Lower leg skin (tissue), 4 donors: ENCODE measurements at regions of chr4 and their contacts with region 1.

Region 1: DNA sequence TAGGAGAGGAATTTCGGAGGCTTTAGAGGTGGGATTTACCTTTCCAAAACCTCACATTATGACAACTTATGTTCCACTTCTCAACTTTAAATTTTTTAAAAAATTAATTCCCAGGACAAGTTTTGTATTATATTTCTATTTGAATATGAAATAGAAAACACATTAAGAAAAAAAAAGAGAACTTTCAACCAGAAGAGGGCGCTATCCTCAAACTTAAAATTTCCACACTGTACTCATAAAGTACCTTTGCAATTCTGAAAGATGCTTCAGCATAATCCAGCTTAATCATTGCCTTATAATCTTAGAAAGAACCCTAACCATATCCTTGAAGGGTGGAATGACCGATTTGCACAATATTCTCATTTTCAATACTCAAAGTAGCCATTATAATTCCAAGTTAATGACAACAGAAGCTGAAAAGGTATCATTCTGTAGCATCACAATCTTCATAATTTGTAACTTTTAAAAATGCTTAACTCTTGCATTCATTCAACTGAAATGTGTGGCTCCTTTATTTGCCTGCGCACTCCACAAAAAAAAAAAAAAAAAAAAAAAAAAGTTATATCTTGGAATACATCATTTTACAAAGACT is 158.0 kb downstream of the KCNIP4 start:
- DNase-seq: no peak
- H3K4me3 ChIP-seq: no peak overlapping the region
- CTCF ChIP-seq: no peak
- POLR2A ChIP-seq: no peak

Region 2: GRCh38 chr4:20075248-20075871 is 1715.2 kb before region 1 on chr4:
- intact Hi-C with region 1: no loop called
- DNase-seq: no peak
- H3K4me3 ChIP-seq: no peak overlapping the region
- CTCF ChIP-seq: no peak
- POLR2A ChIP-seq: no peak

Region 3: DNA sequence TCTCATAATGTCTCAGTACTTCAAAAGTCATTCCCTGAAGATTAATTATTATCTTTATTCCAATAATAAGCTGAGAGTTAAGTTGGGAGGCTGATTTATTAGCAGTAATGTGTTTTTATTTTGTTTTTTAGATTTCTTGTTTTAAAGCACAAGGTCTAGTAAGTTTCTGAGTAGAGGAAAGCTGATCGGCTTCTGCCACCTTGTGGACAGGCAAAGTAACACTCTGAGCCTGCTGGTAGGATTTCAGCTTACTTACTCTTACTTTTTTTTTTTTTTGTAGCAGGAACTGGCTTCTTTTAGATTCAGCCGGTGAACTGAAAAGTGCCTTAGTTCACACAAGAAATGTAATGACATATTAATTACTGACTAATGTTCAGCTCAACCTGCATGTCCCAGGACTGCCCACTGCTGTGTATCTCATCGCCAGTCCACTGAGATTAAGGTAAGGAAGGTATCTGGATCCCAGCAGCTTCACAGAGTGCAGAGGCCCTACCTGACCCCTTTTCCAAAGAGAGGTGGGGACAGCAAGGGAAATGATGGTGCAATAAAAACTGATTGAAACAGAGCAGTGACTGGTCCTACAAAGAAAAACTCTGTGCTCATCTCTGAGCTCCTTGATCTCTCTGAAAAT is 598.8 kb after region 1 on chr4:
- intact Hi-C with region 1: loop called (anchors 2 kb)
- DNase-seq: no peak
- H3K4me3 ChIP-seq: no peak overlapping the region
- CTCF ChIP-seq: no peak
- POLR2A ChIP-seq: no peak